ENCODE measurements at regions of chr11 and their contacts with region 1.

Region 1: DNA sequence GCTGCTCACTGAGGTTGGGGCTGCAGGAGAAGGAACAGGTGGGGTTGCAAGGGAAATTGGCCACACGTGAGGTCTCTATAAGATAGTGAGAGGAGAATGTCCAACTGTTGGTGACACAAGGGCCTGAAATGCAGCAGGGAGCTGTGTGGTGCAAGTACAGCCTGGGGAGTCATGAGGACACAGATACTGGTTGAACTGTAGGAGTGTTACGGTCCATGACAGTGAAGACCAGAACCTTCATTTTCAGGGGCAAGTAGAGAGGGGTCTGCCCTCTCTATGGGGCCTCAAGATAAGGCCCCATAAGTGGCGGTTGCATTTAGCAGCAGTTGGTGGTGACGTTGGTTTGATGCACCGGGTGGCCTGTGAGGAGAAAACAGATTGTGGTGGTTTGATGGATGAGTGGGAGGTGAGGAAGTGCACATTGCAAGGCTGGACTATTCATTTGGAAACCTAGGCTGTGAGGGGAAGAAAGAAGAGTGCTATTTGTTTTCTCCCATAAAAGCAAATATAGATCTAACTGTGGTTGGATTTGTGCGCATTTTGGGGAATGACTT is 39.4 kb downstream of the MICAL2 start:
- DNase-seq: peak; percentile 81
- ATAC-seq: peak; percentile 52
- H3K4me3 Mint-ChIP-seq: peak overlapping the region; percentile 54
- H3K27ac Mint-ChIP-seq: peak overlapping the region; percentile 95
- H3K4me1 Mint-ChIP-seq: peaks cover 63% of the 10 kb centered on the region
- H3K27me3 Mint-ChIP-seq: no peaks in the 10 kb centered on the region

Region 2: DNA sequence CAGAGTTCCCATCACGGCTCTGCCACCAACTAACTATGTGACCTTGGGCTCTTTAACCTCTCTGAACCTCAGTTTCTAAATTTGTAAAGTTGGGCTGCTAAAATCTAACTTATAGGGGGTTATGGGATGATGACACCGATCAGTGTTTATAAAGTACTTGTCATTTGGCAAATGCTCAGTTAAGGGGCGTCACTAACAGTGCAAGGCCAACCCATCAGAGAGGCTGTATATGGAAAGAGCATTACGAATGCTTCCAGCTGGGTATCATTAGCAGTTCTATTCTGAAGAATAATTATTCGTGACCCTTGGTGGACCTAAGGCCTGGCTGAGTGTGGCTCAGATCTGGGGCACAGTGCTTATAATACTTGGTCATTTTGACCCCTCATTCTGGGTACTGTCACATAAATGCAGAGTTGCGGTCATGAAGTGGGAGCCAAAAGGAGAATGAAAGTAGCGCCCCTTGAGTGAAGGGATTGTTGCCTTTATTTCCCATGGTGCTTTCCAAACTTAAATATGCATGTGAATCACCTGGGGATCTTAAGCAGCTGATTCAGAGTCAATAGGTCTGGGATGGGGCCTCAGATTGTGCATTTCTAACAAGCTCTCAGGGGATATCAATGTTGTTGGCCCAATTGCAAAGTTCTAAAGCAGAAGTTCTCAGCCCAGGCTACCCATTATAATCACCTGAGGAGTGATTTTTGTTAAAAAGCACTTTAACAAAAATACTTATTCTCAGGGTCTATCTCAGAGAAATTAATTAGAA is 912.5 kb before region 1 on chr11:
- CTCF ChIA-PET with region 1: no interaction called
- POLR2A ChIA-PET with region 1: no interaction called
- intact Hi-C with region 1: no loop called
- DNase-seq: no peak
- ATAC-seq: no peak
- H3K4me3 Mint-ChIP-seq: no peak overlapping the region
- H3K27ac Mint-ChIP-seq: no peak overlapping the region
- H3K4me1 Mint-ChIP-seq: peaks cover 1% of the 10 kb centered on the region
- H3K27me3 Mint-ChIP-seq: peaks cover 2% of the 10 kb centered on the region

Region 3: GRCh38 chr11:12094872-12095800 is 54.6 kb before region 1 on chr11:
- CTCF ChIA-PET with region 1: no interaction called
- POLR2A ChIA-PET with region 1: no interaction called
- intact Hi-C with region 1: no loop called
- DNase-seq: no peak
- ATAC-seq: no peak
- H3K4me3 Mint-ChIP-seq: no peak overlapping the region
- H3K27ac Mint-ChIP-seq: no peak overlapping the region
- H3K4me1 Mint-ChIP-seq: peaks cover 16% of the 10 kb centered on the region
- H3K27me3 Mint-ChIP-seq: peaks cover 3% of the 10 kb centered on the region

Region 4: DNA sequence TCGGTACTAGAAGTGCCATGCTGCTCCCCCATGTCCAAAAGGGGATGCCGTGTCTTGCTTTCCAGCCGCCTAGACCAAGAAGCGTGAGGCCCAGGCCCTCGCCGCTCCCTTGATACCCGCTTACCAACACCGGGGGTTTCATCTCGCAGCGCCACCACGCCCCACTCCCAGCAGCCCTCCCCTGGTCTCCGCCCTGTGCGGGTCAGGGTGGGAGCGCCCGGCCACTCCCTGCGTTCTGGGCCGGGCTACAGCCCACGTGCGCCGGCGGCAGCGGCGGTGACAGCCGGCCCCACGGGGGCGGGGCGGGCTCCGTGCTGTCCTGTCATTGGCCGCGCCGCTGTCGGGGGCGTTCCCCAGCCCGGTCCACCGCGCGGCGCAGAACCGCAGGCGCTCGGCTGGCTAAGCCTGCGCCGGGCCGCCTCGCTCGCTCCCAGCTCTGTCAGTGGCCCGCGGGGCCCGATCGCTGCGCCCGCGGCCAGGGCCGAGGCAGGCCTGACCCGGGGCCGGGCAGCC is 39.5 kb before region 1 on chr11 and contains the start of gene MICAL2:
- CTCF ChIA-PET with region 1: interaction called, 5 read pairs
- POLR2A ChIA-PET with region 1: interaction called, 10 read pairs
- intact Hi-C with region 1: loop called (anchors 1 to 5 kb)
- DNase-seq: peak; percentile 92
- ATAC-seq: peak; percentile 88
- H3K4me3 Mint-ChIP-seq: peak within 1 kb of the TSS; percentile 75
- H3K27ac Mint-ChIP-seq: peak within 1 kb of the TSS; percentile 90
- H3K4me1 Mint-ChIP-seq: peaks cover 41% of the 10 kb centered on the region
- H3K27me3 Mint-ChIP-seq: no peaks in the 10 kb centered on the region
- total RNA-seq, gene MICAL2: 186 to 207 TPM

Region 5: GRCh38 chr11:12174477-12175143 is 24.9 kb after region 1 on chr11:
- CTCF ChIA-PET with region 1: interaction called, 12 read pairs
- POLR2A ChIA-PET with region 1: interaction called, 29 read pairs
- intact Hi-C with region 1: loop called (anchors 1 kb)
- DNase-seq: no peak
- ATAC-seq: peak; percentile 59
- H3K4me3 Mint-ChIP-seq: peak overlapping the region; percentile 47
- H3K27ac Mint-ChIP-seq: peak overlapping the region; percentile 94
- H3K4me1 Mint-ChIP-seq: peaks cover 69% of the 10 kb centered on the region
- H3K27me3 Mint-ChIP-seq: no peaks in the 10 kb centered on the region

Region 6: GRCh38 chr11:12200279-12201010 is 50.7 kb after region 1 on chr11:
- CTCF ChIA-PET with region 1: interaction called, 7 read pairs
- POLR2A ChIA-PET with region 1: interaction called, 13 read pairs
- intact Hi-C with region 1: no loop called
- DNase-seq: peak; percentile 72
- ATAC-seq: no peak
- H3K4me3 Mint-ChIP-seq: peak overlapping the region; percentile 82
- H3K27ac Mint-ChIP-seq: peak overlapping the region; percentile 71
- H3K4me1 Mint-ChIP-seq: peaks cover 90% of the 10 kb centered on the region
- H3K27me3 Mint-ChIP-seq: no peaks in the 10 kb centered on the region

Region 7: GRCh38 chr11:12224537-12224893 is 74.8 kb after region 1 on chr11:
- CTCF ChIA-PET with region 1: interaction called, 3 read pairs
- POLR2A ChIA-PET with region 1: interaction called, 18 read pairs
- intact Hi-C with region 1: loop called in 1 of 2 experiments (anchors 1 kb)
- DNase-seq: peak; percentile 96
- ATAC-seq: peak; percentile 97
- H3K4me3 Mint-ChIP-seq: peak overlapping the region; percentile 74
- H3K27ac Mint-ChIP-seq: peak overlapping the region; percentile 93
- H3K4me1 Mint-ChIP-seq: peaks cover 48% of the 10 kb centered on the region
- H3K27me3 Mint-ChIP-seq: no peaks in the 10 kb centered on the region

Region 8: GRCh38 chr11:12272821-12273620 is 123.3 kb after region 1 on chr11:
- CTCF ChIA-PET with region 1: no interaction called
- POLR2A ChIA-PET with region 1: no interaction called
- intact Hi-C with region 1: no loop called
- DNase-seq: no peak
- ATAC-seq: no peak
- H3K4me3 Mint-ChIP-seq: no peak overlapping the region
- H3K27ac Mint-ChIP-seq: no peak overlapping the region
- H3K4me1 Mint-ChIP-seq: no peaks in the 10 kb centered on the region
- H3K27me3 Mint-ChIP-seq: no peaks in the 10 kb centered on the region

Region 9: GRCh38 chr11:14075118-14076078 is 1925.6 kb after region 1 on chr11:
- CTCF ChIA-PET with region 1: no interaction called
- POLR2A ChIA-PET with region 1: no interaction called
- intact Hi-C with region 1: no loop called
- DNase-seq: peak; percentile 82
- ATAC-seq: peak; percentile 96
- H3K4me3 Mint-ChIP-seq: peak overlapping the region; percentile 37
- H3K27ac Mint-ChIP-seq: peak overlapping the region; percentile 37
- H3K4me1 Mint-ChIP-seq: peaks cover 58% of the 10 kb centered on the region
- H3K27me3 Mint-ChIP-seq: no peaks in the 10 kb centered on the region

Measured in activated CD4-positive, alpha-beta T cell treated with anti-CD3 and anti-CD28 coated beads for 36 hours (primary cell).